Caco-2 (cell line): ENCODE measurements at regions of chr9 and their contacts with region 1.

Region 1: DNA sequence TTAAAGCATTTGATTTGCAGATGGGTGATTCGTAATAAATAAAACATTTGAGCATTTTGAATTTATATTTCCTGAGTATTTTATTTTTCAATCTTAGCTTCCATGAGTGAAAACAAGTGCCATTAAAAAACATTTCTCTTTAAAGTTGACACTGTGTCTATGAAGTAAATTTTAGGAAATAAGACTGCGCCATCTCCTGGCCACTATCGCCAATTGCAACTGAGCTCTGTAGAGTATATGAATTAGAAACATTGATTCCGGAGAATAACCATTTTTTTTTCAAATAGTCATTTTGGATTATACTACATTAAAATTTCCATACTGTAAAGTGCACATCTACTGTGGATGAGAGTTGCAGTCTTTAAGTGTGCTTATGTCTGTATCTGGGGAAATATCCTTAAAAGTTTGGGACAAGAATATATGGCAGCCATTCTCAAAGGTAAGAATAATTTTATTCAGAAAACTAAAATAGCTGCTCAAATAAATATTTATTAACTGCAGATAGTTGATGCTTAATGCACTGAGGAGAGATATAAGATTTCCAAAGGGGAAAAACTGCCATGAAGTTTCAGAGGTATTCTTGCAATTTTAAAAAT is 5.9 kb downstream of the DMRTA1 start:
- DNase-seq: peak in 1 of 2 experiments; percentile 33
- H3K4me3 ChIP-seq: no peak overlapping the region
- H3K4me3 Mint-ChIP-seq: no peak overlapping the region
- H3K27ac Mint-ChIP-seq: no peak overlapping the region
- H3K4me1 ChIP-seq: no peaks in the 10 kb centered on the region
- H3K4me1 Mint-ChIP-seq: no peaks in the 10 kb centered on the region
- H3K27me3 ChIP-seq: no peaks in the 10 kb centered on the region
- H3K27me3 Mint-ChIP-seq: peaks cover 4% of the 10 kb centered on the region
- CTCF ChIP-seq: peak; percentile 54 to 55

Region 2: DNA sequence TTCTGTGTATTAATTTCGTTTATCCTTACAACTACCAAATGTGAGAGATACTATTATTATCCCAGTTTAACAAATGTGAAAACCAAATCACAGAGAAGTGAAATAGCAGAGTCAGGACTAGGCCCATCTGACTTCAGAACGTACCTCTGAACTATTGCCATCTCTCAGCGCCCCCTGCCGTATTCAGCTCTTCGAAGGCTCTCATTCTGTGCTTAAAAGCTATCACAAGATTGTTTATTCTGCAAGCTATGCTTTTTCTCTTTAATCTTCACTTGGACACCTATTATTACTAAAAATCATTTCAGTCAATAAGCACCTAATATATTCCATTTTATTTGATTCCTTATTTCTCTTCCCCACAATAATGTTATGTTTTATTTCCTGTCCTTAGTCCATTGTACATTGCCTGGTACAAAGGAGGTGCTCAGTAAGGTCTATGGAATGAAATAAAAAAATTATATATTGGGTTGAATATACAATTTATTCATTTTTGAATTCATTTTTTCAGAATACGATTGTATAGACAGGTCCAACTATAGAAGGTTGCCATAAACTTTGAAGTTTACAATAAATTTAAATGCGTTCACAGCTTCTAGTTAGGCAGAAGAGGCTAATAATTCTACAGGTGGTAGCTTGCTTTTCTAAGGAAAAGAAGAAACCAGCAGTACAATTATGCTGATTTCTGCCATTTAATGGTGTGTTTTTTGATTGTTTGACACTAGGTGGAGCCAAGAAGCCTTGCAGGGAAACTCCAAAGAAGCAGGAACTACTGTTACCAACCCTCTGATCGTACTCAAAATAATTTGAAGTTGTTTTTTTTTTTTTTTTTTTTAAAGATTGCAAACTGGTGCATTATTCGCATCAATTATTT is 208.1 kb before region 1 on chr9:
- CTCF ChIA-PET with region 1: interaction called, 6 read pairs
- POLR2A ChIA-PET with region 1: no interaction called
- intact Hi-C with region 1: loop called (anchors 1 kb)
- DNase-seq: peak in 1 of 2 experiments; percentile 33
- H3K4me3 ChIP-seq: no peak overlapping the region
- H3K4me3 Mint-ChIP-seq: no peak overlapping the region
- H3K27ac Mint-ChIP-seq: no peak overlapping the region
- H3K4me1 ChIP-seq: no peaks in the 10 kb centered on the region
- H3K4me1 Mint-ChIP-seq: no peaks in the 10 kb centered on the region
- H3K27me3 ChIP-seq: no peaks in the 10 kb centered on the region
- H3K27me3 Mint-ChIP-seq: peaks cover 6% of the 10 kb centered on the region
- CTCF ChIP-seq: peak in 1 of 2 experiments; percentile 49

Region 3: DNA sequence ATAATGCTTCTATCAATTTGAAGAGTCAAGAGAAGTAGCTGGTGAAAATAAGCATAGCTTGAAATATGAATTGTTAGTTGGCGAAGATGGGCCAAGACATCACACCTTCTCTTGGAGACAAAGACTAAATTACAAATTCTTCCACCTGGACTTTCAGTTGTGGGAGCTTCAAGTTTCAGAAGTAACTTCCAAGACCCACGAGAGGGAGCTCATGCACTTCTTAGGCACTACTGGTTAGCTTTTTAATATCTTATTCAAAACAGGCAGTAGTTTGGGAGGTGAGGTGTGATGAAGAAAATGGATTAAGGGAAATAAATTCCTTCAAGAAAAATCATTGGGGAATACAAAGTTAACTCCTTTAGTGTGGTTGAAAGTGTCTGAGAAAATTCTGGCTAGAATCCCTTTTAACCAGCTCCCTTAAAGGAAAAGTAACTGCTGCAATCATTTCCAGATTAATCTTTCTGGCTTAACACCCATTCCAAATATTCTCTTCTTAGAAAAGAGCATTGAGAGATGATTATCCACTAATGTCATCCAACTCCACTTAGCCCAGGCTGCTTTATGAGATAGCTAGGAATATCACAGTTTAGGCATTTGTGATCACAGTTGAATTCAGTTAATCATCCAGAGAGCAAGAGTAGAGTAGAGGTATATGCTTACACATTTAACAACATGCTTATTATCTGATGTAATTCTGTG is 145.4 kb before region 1 on chr9:
- CTCF ChIA-PET with region 1: interaction called, 40 read pairs
- POLR2A ChIA-PET with region 1: no interaction called
- intact Hi-C with region 1: loop called (anchors 1 kb)
- DNase-seq: peak; percentile 33 to 42
- H3K4me3 ChIP-seq: no peak overlapping the region
- H3K4me3 Mint-ChIP-seq: no peak overlapping the region
- H3K27ac Mint-ChIP-seq: no peak overlapping the region
- H3K4me1 ChIP-seq: no peaks in the 10 kb centered on the region
- H3K4me1 Mint-ChIP-seq: no peaks in the 10 kb centered on the region
- H3K27me3 ChIP-seq: no peaks in the 10 kb centered on the region
- H3K27me3 Mint-ChIP-seq: peaks cover 6% of the 10 kb centered on the region
- CTCF ChIP-seq: peak; percentile 44 to 52